ENCODE measurements at regions of chr17 and their contacts with region 1.

Region 1: GRCh38 chr17:43388359-43389045 is 10.3 kb upstream of the ARL4D start:
- DNase-seq: peak; percentile 98
- H3K4me3 Mint-ChIP-seq: peak overlapping the region; percentile 98
- H3K27ac Mint-ChIP-seq: peak overlapping the region; percentile 100
- H3K4me1 Mint-ChIP-seq: peaks cover 26% of the 10 kb centered on the region
- H3K27me3 Mint-ChIP-seq: peaks cover 2% of the 10 kb centered on the region

Region 2: DNA sequence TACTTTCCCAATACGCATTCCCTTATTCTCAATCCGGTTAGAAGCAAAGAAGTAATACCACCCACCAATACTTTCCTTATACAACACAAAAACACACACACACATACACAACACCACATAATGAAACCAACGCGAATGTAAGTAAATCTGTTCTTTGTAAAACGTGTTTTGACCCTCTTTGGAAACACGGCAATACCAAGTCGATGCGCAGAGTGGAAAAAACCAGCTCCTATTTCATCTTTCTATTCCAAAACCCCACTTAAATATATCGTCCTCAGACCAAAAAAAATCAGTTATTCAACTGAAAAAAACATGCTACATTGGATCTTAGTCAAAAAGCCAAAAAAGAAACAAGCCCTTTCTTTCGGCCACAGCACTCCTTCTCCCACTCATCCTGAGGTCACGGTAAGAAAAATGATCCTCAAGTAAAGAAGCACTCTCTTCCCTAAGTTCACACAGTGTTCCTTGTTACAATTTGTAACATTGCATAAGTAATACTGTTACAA is 20.7 kb before region 1 on chr17:
- intact Hi-C with region 1: loop called (anchors 1 kb)
- DNase-seq: peak; percentile 86
- H3K4me3 Mint-ChIP-seq: peak overlapping the region; percentile 93
- H3K27ac Mint-ChIP-seq: peak overlapping the region; percentile 100
- H3K4me1 Mint-ChIP-seq: peaks cover 51% of the 10 kb centered on the region
- H3K27me3 Mint-ChIP-seq: no peaks in the 10 kb centered on the region

Measured in activated CD4-positive, alpha-beta T cell treated with anti-CD3 and anti-CD28 coated beads, Interleukin-2, amount 10 ng/mL, durations not matched to agents 24 days and 14 days (primary cell).